Tibial artery (tissue), 4 donors: ENCODE measurements at regions of chr12 and their contacts with region 1.

Region 1: GRCh38 chr12:3576891-3577290 is 85.9 kb downstream of the PRMT8 start:
- DNase-seq: no peak
- H3K4me3 ChIP-seq: no peak overlapping the region
- H3K27ac ChIP-seq: no peak overlapping the region
- H3K4me1 ChIP-seq: no peaks in the 10 kb centered on the region
- H3K27me3 ChIP-seq: peaks cover 0 to 7% of the 10 kb centered on the region in 2 donors
- CTCF ChIP-seq: no peak

Region 2: DNA sequence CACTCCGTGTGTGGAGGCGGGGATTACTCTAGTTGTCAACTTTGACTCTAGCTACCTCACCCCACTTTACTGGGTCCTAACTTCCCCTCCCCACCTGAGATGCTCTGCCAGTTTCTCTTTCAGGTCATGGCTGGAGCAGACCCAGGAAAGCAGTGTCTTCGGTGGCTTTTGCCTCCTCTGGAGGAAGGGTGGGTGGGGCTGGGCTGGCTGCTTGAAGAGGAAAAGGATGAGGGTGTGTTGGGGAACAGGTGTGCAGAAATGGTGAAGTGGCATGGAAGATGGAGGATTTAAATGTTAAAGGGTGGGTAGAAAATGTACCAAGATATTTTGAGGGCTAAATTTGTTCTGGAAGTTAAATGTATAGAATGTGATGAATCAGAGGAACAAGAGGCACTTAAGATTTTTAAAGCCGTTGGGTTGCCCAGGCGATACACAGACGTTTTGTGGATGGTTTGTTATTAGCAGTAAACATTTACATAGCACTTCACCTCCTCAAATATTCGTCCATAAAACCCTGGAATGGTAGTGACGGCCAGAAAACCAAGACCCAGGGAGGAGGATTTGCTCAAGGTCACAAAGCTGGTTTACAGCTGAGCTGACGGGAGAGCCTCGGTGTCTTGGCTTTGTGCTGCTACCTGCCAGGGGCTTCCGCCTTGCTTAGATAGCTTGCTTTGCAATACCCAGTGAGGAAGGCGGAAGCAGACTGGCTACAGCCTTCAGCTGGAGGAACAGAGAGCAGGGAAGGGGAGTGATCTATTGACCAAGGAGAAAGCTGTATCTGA is 158.1 kb before region 1 on chr12:
- intact Hi-C with region 1: no loop called
- DNase-seq: no peak
- H3K4me3 ChIP-seq: no peak overlapping the region
- H3K27ac ChIP-seq: no peak overlapping the region
- H3K4me1 ChIP-seq: peaks cover 0 to 4% (median 0%) of the 10 kb centered on the region in 4 donors
- H3K27me3 ChIP-seq: peaks cover 0 to 26% of the 10 kb centered on the region in 2 donors
- CTCF ChIP-seq: no peak

Region 3: GRCh38 chr12:3496957-3497356 is 79.9 kb before region 1 on chr12:
- intact Hi-C with region 1: loop called (anchors 5 kb)
- DNase-seq: no peak
- H3K4me3 ChIP-seq: no peak overlapping the region
- H3K27ac ChIP-seq: no peak overlapping the region
- H3K4me1 ChIP-seq: peaks cover 0 to 15% (median 6%) of the 10 kb centered on the region in 4 donors
- H3K27me3 ChIP-seq: peaks cover 0 to 52% of the 10 kb centered on the region in 2 donors
- CTCF ChIP-seq: no peak

Region 4: DNA sequence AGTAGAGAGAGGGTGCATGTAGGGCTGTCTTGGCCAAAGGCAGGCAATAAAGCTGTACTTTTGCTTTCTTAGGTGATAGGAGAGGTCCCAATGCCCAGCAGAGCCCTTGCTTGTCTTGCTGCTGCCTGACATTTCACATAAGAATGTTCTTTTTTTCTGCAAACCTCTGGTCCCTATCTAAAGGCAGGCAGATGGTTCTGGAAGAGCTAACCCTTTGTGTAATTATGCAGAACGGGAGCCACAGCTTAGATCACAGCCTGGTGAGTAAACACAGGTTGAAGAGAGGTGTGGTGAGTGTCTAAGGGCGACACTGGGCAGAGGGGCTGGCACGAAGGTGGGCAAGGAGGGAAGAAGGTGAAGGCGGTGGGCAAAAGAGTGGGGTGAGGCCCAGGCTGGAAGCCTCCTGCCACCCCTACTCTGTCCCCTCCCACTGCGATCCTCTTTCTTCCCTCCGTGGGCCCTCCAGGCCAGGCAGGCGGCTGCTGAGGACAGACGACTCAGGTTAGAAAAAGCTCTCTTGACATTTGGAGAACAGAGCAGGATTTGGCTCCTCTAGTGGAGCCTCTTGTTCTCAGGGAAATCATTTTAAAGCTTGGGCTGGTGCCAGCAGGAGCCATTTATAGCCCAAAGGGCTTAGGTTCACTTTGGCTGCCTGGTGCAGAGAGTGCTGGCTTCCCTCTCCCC is 43.0 kb before region 1 on chr12:
- intact Hi-C with region 1: no loop called
- DNase-seq: no peak
- H3K4me3 ChIP-seq: no peak overlapping the region
- H3K27ac ChIP-seq: no peak overlapping the region
- H3K4me1 ChIP-seq: peaks cover 0 to 14% (median 0%) of the 10 kb centered on the region in 4 donors
- H3K27me3 ChIP-seq: peaks cover 0 to 7% of the 10 kb centered on the region in 2 donors
- CTCF ChIP-seq: peak in 1 of 2 experiments; percentile 2